IMR-90 (cell line): ENCODE measurements at regions of chr9 and their contacts with region 1.

Region 1: GRCh38 chr9:35538361-35539234 is 48.7 kb downstream of the RUSC2 start:
- DNase-seq: peak; percentile 82
- ATAC-seq: peak; percentile 94
- H3K4me3 ChIP-seq: peak overlapping the region; percentile 60
- H3K27ac ChIP-seq: peak overlapping the region; percentile 95
- H3K4me1 ChIP-seq: peaks cover 25% of the 10 kb centered on the region
- H3K27me3 ChIP-seq: no peaks in the 10 kb centered on the region
- CTCF ChIP-seq: no peak
- POLR2A ChIP-seq: no peak
- RAD21 ChIP-seq: peak; percentile 19; the same call in 1 of the 2 replicates

Region 2: DNA sequence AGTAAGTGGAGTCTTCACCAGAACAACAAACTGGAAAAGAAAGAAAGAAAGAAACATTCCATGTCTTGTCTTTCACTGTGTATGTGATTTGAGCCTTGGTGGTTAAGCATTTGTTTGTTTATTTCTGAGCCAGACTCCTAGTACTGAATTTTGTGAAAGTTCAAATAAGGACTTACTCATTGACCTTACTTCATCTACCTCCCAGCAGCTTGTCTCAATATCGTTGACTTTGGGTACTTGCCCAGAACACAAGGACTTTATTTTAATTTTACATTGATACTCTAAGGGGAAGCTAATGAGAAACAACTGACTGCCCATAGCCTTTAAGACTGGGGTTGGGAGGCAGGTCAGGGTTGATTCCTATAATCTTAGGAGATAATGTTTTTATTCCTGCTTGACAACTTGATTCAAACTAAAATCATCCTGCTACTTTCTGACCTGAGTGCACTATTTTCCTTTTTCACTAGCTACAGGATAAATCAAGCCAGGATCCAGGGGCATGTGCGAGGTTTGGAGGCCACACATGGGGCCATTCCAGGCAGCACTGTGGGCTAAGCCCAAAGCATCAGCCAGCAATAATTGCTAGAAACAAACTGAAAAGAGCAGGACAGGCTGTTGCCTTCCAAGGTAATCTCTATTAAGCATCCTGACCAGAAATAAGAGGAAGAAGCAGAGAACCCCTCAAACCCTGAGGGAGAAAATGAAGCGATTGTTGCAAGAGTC is 187.6 kb before region 1 on chr9:
- CTCF ChIA-PET with region 1: no interaction called
- POLR2A ChIA-PET with region 1: no interaction called
- dilution Hi-C with region 1: no loop called
- in situ Hi-C with region 1: no loop called
- intact Hi-C with region 1: loop called (anchors 10 kb)
- DNase-seq: peak; percentile 93
- ATAC-seq: peak; percentile 90
- H3K4me3 ChIP-seq: no peak overlapping the region
- H3K27ac ChIP-seq: peak overlapping the region; percentile 46; the same call in 1 of the 2 replicates
- H3K4me1 ChIP-seq: peaks cover 26% of the 10 kb centered on the region
- H3K27me3 ChIP-seq: no peaks in the 10 kb centered on the region
- CTCF ChIP-seq: no peak
- POLR2A ChIP-seq: no peak
- RAD21 ChIP-seq: no peak

Region 3: DNA sequence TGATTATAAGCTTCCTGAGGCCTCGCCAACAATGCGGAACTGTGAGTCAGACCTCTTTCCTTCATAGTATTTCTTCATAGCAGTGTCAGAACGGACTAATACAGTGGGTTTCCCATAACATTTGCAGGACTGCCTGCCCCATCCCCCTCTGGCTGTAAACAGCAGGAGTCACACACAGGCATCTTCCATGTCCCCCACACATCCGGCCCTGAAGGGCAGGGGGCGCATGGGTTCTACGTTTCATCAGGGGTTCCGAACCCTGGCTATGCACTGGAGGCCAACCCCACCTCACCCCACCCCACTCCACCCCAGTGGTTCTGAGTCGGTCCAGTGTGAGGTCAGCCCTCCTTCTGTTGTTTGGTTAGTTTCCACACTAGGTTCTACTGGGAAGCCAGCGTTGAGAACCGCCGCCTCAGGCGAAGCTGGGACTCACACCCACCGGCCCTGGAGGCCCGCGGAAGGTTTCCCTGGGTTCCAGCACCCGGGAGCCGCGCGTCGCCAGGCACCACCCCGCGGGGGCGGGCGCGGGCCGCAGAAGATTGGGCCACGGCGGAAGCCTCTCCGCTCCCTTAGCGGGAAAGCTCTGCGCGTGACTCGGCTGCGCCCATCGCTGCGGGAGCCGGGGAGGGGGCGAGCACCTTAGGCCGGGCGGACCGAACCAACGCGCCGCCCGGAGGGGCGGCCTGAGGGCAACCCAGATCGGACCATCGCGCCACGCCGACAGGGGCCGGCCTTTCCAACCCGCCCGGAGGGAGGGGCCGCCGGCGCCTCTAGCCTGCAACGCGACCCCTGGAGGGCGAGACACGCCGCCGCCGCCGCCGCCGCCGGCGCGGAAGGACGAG is 49.1 kb before region 1 on chr9 and contains the start of gene RUSC2:
- CTCF ChIA-PET with region 1: interaction called, 3 read pairs
- POLR2A ChIA-PET with region 1: interaction called, 5 read pairs
- dilution Hi-C with region 1: no loop called
- in situ Hi-C with region 1: no loop called
- intact Hi-C with region 1: loop called (anchors 1 kb)
- DNase-seq: peak; percentile 90
- ATAC-seq: peak; percentile 85
- H3K4me3 ChIP-seq: peak within 1 kb of the TSS; percentile 89
- H3K27ac ChIP-seq: peak within 1 kb of the TSS; percentile 96
- H3K4me1 ChIP-seq: peaks cover 3% of the 10 kb centered on the region
- H3K27me3 ChIP-seq: no peaks in the 10 kb centered on the region
- CTCF ChIP-seq: peak; percentile 41
- POLR2A ChIP-seq: peak; percentile 68
- RAD21 ChIP-seq: peak; percentile 52
- total RNA-seq, gene RUSC2: 17.4 and 18.3 TPM in 2 replicates

Region 4: GRCh38 chr9:35500130-35500748 is 38.4 kb before region 1 on chr9:
- CTCF ChIA-PET with region 1: no interaction called
- POLR2A ChIA-PET with region 1: no interaction called
- dilution Hi-C with region 1: no loop called
- in situ Hi-C with region 1: no loop called
- intact Hi-C with region 1: no loop called
- DNase-seq: no peak
- ATAC-seq: no peak
- H3K4me3 ChIP-seq: no peak overlapping the region
- H3K27ac ChIP-seq: no peak overlapping the region
- H3K4me1 ChIP-seq: peaks cover 3% of the 10 kb centered on the region; the same call in 1 of the 2 replicates
- H3K27me3 ChIP-seq: no peaks in the 10 kb centered on the region
- CTCF ChIP-seq: no peak
- POLR2A ChIP-seq: no peak
- RAD21 ChIP-seq: no peak

Region 5: GRCh38 chr9:35518226-35518821 is 20.3 kb before region 1 on chr9:
- CTCF ChIA-PET with region 1: interaction called, 3 read pairs
- POLR2A ChIA-PET with region 1: interaction called, 13 read pairs
- dilution Hi-C with region 1: no loop called
- in situ Hi-C with region 1: no loop called
- intact Hi-C with region 1: no loop called
- DNase-seq: peak; percentile 94
- ATAC-seq: peak; percentile 68
- H3K4me3 ChIP-seq: no peak overlapping the region
- H3K27ac ChIP-seq: peak overlapping the region; percentile 94
- H3K4me1 ChIP-seq: peaks cover 42% of the 10 kb centered on the region
- H3K27me3 ChIP-seq: no peaks in the 10 kb centered on the region
- CTCF ChIP-seq: no peak
- POLR2A ChIP-seq: peak; percentile 49; the same call in 1 of the 2 replicates
- RAD21 ChIP-seq: no peak

Region 6: DNA sequence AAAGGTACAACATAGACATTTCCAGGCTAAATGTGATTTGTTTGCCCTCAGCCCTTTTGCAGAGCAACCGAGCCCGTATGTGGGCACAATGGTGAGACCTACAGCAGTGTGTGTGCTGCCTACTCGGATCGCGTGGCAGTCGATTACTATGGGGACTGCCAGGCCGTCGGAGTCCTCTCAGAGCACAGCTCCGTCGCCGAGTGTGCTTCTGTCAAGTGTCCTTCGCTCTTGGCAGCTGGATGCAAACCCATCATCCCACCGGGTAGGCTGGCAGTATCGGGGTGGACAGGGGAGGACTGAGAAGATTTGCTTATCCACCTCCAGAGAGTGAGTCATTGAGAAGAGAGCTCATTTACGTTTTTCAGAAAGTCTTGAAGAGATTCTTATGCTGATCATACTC is 580.1 kb after region 1 on chr9:
- CTCF ChIA-PET with region 1: no interaction called
- POLR2A ChIA-PET with region 1: no interaction called
- dilution Hi-C with region 1: no loop called
- in situ Hi-C with region 1: no loop called
- intact Hi-C with region 1: no loop called
- DNase-seq: peak; percentile 33
- ATAC-seq: peak; percentile 42; the same call in 1 of the 2 replicates
- H3K4me3 ChIP-seq: no peak overlapping the region
- H3K27ac ChIP-seq: peak overlapping the region; percentile 9; the same call in 1 of the 2 replicates
- H3K4me1 ChIP-seq: peaks cover 7% of the 10 kb centered on the region
- H3K27me3 ChIP-seq: no peaks in the 10 kb centered on the region
- CTCF ChIP-seq: no peak
- POLR2A ChIP-seq: no peak
- RAD21 ChIP-seq: no peak